Left ventricle myocardium inferior (tissue), 1 donor: ENCODE measurements at regions of chr2 and their contacts with region 1.

Region 1: DNA sequence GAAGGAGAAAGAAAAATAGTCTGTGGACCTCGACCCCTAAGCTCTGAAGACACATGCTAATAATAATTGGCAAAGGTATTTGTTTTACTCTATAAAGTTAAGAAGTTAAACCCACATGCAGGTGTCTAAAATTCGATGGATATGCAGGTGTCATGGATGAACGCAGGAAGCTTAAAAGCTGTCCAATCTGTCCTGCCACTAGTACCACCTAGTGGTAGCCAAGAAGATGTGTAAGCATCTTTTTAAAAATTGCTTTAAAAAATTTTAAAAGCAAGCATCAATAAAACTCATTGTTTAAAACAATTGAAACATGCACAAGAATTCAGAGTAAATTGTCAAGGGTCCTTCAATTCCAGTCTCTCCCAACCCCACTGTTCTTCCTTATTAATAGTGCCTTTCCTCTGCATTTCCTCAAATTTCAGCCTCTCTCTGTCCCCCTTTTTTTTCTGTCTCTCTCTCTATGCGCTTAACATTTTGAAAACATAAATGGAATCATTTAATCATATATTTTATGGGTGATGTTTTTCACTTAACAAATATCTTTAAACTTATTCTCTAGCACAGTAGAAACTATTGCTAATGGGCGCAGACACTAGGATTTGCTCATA is 30.6 kb upstream of the PPP3R1 start:
- DNase-seq: no peak
- H3K4me3 ChIP-seq: no peak overlapping the region
- H3K27ac ChIP-seq: no peak overlapping the region
- H3K4me1 ChIP-seq: peaks cover 22% of the 10 kb centered on the region
- H3K27me3 ChIP-seq: no peaks in the 10 kb centered on the region
- CTCF ChIP-seq: peak; percentile 83

Region 2: DNA sequence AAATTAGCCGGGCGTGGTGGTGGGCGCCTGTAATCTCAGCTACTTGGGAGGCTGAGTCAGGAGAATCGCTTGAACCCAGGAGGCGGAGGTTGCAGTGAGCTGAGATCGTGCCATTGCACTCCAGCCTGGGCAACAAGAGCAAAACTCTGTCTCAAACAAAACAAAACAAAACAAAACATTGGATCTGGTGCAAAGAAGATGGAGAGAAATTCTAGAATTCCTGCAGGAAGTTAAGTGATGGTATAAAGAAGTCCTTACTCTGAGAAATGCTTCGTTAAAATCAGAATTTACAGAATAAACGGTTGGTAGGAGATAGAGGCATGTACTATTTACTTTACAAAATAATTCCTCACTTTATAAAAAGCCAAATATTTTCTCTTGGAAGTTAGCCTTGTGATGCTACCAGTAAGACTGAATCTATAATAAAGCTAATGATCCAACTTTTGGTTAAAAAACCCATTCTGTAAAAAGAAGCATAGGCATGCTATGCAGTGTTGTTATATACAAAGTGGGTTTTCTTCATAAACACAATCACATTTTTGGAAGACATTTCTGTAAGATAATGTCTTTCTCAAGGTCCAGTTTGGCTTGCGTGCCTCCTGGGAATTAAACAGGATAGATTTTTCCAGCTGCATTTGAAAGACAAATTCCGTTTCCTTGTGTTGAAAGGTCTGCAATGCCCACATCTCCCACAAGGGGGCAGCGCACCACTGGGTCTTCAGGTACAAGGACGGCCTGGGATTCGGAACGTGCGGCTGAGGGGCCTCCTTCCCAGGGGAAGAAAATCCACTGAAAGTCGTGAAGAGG is 160.8 kb before region 1 on chr2:
- intact Hi-C with region 1: loop called (anchors 10 kb)
- DNase-seq: peak; percentile 88
- H3K4me3 ChIP-seq: no peak overlapping the region
- H3K27ac ChIP-seq: no peak overlapping the region
- H3K4me1 ChIP-seq: peaks cover 17% of the 10 kb centered on the region
- H3K27me3 ChIP-seq: no peaks in the 10 kb centered on the region
- CTCF ChIP-seq: peak; percentile 99

Region 3: GRCh38 chr2:68196120-68196716 is 86.7 kb before region 1 on chr2:
- intact Hi-C with region 1: loop called (anchors 10 kb)
- DNase-seq: no peak
- H3K4me3 ChIP-seq: no peak overlapping the region
- H3K27ac ChIP-seq: no peak overlapping the region
- H3K4me1 ChIP-seq: peaks cover 54% of the 10 kb centered on the region
- H3K27me3 ChIP-seq: no peaks in the 10 kb centered on the region
- CTCF ChIP-seq: peak; percentile 82

Region 4: DNA sequence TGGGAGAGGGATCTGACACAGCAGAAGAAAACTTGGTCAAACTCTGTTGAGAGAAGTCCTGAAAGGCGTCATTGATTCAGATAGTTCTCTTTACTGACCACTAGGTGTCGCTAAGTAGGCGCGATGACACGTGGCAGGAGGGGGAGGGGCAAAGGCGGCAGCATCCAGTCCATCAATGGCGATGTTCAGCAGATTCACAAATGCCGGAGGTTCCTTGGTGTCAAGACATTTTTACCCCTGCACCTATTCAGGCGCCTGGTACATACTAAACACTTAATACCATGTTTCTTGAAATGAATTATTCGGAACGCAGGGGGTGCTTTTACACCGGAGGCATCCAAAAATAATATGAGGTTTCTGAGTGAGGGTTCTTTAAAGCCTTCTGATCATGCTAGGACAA is 79.2 kb after region 1 on chr2:
- intact Hi-C with region 1: no loop called
- DNase-seq: peak; percentile 77
- H3K4me3 ChIP-seq: no peak overlapping the region
- H3K27ac ChIP-seq: no peak overlapping the region
- H3K4me1 ChIP-seq: peaks cover 6% of the 10 kb centered on the region
- H3K27me3 ChIP-seq: no peaks in the 10 kb centered on the region
- CTCF ChIP-seq: peak; percentile 84